A673 (cell line): ENCODE measurements at regions of chr3 and their contacts with region 1.

Region 1: GRCh38 chr3:9715764-9716437 is 12.3 kb downstream of the CPNE9 start:
- DNase-seq: peak; percentile 58
- H3K4me3 ChIP-seq: no peak overlapping the region
- H3K27ac ChIP-seq: no peak overlapping the region
- H3K4me1 ChIP-seq: no peaks in the 10 kb centered on the region
- H3K27me3 ChIP-seq: peaks cover 37% of the 10 kb centered on the region
- CTCF ChIP-seq: peak; percentile 51

Region 2: GRCh38 chr3:9881441-9881840 is 165.5 kb after region 1 on chr3:
- CTCF ChIA-PET with region 1: interaction called, 10 read pairs
- POLR2A ChIA-PET with region 1: no interaction called
- intact Hi-C with region 1: no loop called
- DNase-seq: no peak
- H3K4me3 ChIP-seq: no peak overlapping the region
- H3K27ac ChIP-seq: no peak overlapping the region
- H3K4me1 ChIP-seq: no peaks in the 10 kb centered on the region
- H3K27me3 ChIP-seq: no peaks in the 10 kb centered on the region
- CTCF ChIP-seq: no peak

Region 3: GRCh38 chr3:10299679-10300078 is 583.8 kb after region 1 on chr3:
- CTCF ChIA-PET with region 1: no interaction called
- POLR2A ChIA-PET with region 1: no interaction called
- intact Hi-C with region 1: no loop called
- DNase-seq: no peak
- H3K4me3 ChIP-seq: no peak overlapping the region
- H3K27ac ChIP-seq: no peak overlapping the region
- H3K4me1 ChIP-seq: no peaks in the 10 kb centered on the region
- H3K27me3 ChIP-seq: no peaks in the 10 kb centered on the region
- CTCF ChIP-seq: no peak